ENCODE measurements at regions of chr18 and their contacts with region 1.

Region 1: DNA sequence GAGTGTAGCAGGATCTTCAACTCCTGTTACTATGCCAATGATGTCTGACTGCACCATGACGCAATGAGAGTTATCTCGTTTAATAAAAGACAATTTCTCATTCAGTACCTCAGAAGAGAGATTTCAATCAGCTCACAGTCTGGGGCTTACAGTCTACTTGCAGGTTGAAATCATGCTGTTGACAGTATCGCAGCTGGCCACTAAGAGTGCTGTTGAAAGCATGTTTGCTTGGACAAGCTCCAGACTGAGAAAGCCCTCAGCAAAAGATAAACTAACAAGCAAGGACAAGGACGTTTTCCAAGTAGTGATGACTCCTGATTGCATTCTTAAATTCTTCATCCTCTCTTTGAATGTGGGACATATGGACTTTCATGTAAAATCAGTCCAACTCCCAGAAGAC is 145.2 kb upstream of the SYT4 start:
- DNase-seq: no peak
- ATAC-seq: no peak
- H3K4me3 ChIP-seq: no peak overlapping the region
- H3K4me3 Mint-ChIP-seq: no peak overlapping the region
- H3K27ac ChIP-seq: no peak overlapping the region
- H3K27ac Mint-ChIP-seq: no peak overlapping the region
- H3K4me1 ChIP-seq: no peaks in the 10 kb centered on the region
- H3K4me1 Mint-ChIP-seq: no peaks in the 10 kb centered on the region
- H3K27me3 ChIP-seq: no peaks in the 10 kb centered on the region
- H3K27me3 Mint-ChIP-seq: no peaks in the 10 kb centered on the region
- CTCF ChIP-seq: no peak

Region 2: DNA sequence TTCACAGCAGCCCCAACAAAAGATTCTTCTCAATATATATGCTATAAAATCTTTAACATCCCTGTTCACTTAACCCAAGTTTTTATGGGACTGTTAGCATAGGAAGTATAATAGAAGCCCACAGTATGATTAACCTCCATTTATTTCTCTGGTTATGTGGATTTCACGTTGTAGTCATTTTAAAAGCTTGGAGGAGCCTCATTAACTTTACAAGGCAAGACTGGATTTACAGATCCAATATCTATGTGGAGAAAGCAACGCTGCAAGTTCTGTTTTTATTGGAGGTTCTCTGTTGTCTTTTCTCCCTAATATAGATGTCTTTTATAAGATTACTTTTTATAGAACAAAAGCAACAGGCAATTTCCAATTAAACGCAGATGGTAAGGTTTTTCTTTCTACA is 30.4 kb before region 1 on chr18:
- CTCF ChIA-PET with region 1: no interaction called
- POLR2A ChIA-PET with region 1: no interaction called
- intact Hi-C with region 1: loop called in 1 of 2 experiments (anchors 1 kb)
- DNase-seq: no peak
- ATAC-seq: no peak
- H3K4me3 ChIP-seq: no peak overlapping the region
- H3K4me3 Mint-ChIP-seq: no peak overlapping the region
- H3K27ac ChIP-seq: no peak overlapping the region
- H3K27ac Mint-ChIP-seq: no peak overlapping the region
- H3K4me1 ChIP-seq: no peaks in the 10 kb centered on the region
- H3K4me1 Mint-ChIP-seq: no peaks in the 10 kb centered on the region
- H3K27me3 ChIP-seq: no peaks in the 10 kb centered on the region
- H3K27me3 Mint-ChIP-seq: no peaks in the 10 kb centered on the region
- CTCF ChIP-seq: no peak

Region 3: GRCh38 chr18:43486462-43486861 is 63.9 kb after region 1 on chr18:
- CTCF ChIA-PET with region 1: no interaction called
- POLR2A ChIA-PET with region 1: no interaction called
- intact Hi-C with region 1: no loop called
- DNase-seq: peak in 1 of 9 experiments; percentile 27
- ATAC-seq: no peak
- H3K4me3 ChIP-seq: no peak overlapping the region
- H3K4me3 Mint-ChIP-seq: no peak overlapping the region
- H3K27ac ChIP-seq: no peak overlapping the region
- H3K27ac Mint-ChIP-seq: no peak overlapping the region
- H3K4me1 ChIP-seq: no peaks in the 10 kb centered on the region
- H3K4me1 Mint-ChIP-seq: no peaks in the 10 kb centered on the region
- H3K27me3 ChIP-seq: no peaks in the 10 kb centered on the region
- H3K27me3 Mint-ChIP-seq: no peaks in the 10 kb centered on the region
- CTCF ChIP-seq: no peak